IMR-90 (cell line): ENCODE measurements at regions of chr3 and their contacts with region 1.

Region 1: DNA sequence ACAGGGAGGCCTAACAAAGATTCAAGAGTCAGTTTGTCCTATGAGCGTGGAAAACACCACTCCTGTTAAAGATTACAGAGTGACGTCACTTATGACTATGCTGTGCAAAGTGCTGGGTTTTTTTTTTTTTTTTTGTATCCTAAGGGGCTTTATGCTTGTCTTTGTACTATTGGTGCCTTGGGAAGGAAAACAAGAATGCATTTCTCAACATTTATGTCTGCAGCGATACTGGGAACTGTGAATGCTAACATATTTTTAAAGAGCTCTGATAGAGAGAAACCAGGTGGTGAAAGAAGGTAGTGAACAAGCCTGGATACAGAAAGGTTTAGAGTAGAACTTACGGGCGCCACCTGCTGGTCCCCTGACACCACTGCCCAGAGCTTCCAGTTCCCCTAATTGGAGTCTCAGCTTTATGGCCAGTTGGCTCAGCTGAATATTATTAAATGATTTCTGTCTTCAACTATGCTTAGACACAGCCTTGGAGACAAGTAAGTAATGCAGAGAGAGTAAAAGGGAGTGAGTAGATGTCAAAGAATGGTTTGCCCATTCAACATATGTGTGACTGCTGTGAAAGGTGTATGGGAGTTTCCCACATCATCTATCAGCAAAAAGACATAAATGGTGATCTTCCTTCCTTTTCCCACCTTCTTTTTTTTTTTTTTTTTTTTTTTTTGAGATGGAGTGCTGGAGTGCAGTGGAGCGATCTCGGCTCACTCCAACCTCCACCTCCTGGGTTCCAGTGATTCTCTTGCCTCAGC is 807.9 kb upstream of the CFAP20DC start:
- DNase-seq: peak; percentile 81
- ATAC-seq: peak; percentile 99
- H3K4me3 ChIP-seq: no peak overlapping the region
- H3K27ac ChIP-seq: no peak overlapping the region
- H3K4me1 ChIP-seq: no peaks in the 10 kb centered on the region
- H3K27me3 ChIP-seq: no peaks in the 10 kb centered on the region
- CTCF ChIP-seq: peak; percentile 96
- POLR2A ChIP-seq: no peak
- RAD21 ChIP-seq: peak; percentile 90

Region 2: GRCh38 chr3:58824285-58824684 is 1033.5 kb before region 1 on chr3:
- CTCF ChIA-PET with region 1: no interaction called
- POLR2A ChIA-PET with region 1: no interaction called
- dilution Hi-C with region 1: no loop called
- in situ Hi-C with region 1: loop called (anchors 25 kb)
- intact Hi-C with region 1: loop called (anchors 10 kb)
- DNase-seq: peak; percentile 73
- ATAC-seq: peak; percentile 89
- H3K4me3 ChIP-seq: no peak overlapping the region
- H3K27ac ChIP-seq: no peak overlapping the region
- H3K4me1 ChIP-seq: no peaks in the 10 kb centered on the region
- H3K27me3 ChIP-seq: no peaks in the 10 kb centered on the region
- CTCF ChIP-seq: peak; percentile 89
- POLR2A ChIP-seq: no peak
- RAD21 ChIP-seq: peak; percentile 93

Region 3: GRCh38 chr3:59313365-59313764 is 544.4 kb before region 1 on chr3:
- CTCF ChIA-PET with region 1: no interaction called
- POLR2A ChIA-PET with region 1: no interaction called
- dilution Hi-C with region 1: no loop called
- in situ Hi-C with region 1: no loop called
- intact Hi-C with region 1: loop called (anchors 1 kb)
- DNase-seq: peak; percentile 13
- ATAC-seq: peak; percentile 79
- H3K4me3 ChIP-seq: no peak overlapping the region
- H3K27ac ChIP-seq: no peak overlapping the region
- H3K4me1 ChIP-seq: no peaks in the 10 kb centered on the region
- H3K27me3 ChIP-seq: no peaks in the 10 kb centered on the region
- CTCF ChIP-seq: peak; percentile 61
- POLR2A ChIP-seq: no peak
- RAD21 ChIP-seq: peak; percentile 70

Region 4: GRCh38 chr3:59632760-59633573 is 224.8 kb before region 1 on chr3:
- CTCF ChIA-PET with region 1: interaction called, 5 read pairs
- POLR2A ChIA-PET with region 1: interaction called, 3 read pairs
- dilution Hi-C with region 1: no loop called
- in situ Hi-C with region 1: no loop called
- intact Hi-C with region 1: loop called (anchors 10 kb)
- DNase-seq: peak; percentile 50
- ATAC-seq: peak; percentile 90
- H3K4me3 ChIP-seq: no peak overlapping the region
- H3K27ac ChIP-seq: peak overlapping the region; percentile 53; the same call in 1 of the 2 replicates
- H3K4me1 ChIP-seq: peaks cover 7% of the 10 kb centered on the region
- H3K27me3 ChIP-seq: no peaks in the 10 kb centered on the region
- CTCF ChIP-seq: no peak
- POLR2A ChIP-seq: no peak
- RAD21 ChIP-seq: no peak

Region 5: DNA sequence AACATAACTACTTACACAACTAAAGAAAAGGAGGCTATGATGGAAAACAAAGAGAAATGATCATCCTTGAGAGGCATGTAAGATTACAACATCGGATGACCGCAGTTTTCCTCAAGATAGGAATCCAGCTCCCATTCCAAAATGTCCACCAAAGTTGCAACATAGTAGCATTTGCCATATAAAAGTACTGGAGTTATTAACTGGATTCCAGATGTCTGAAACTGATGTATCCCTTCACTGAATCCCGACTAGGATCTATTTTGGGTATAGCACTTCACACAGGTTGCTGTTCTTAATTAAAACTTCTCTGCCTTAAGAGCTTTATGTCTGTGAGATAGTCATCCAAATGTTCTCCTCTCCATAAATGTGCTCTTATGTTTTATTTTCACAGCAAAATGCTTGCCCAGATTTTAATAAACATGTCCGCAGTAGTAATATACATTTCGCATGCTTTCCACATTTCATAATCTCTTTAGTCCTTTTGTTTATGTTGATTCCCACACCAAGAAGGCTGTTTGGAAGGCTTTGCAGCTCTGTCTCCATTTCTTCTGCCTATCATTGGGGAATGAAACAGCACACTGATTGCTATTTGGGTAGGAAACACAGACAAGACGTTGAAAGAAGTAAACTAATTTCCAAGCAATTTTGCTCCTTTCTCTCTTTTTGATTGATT is 91.4 kb before region 1 on chr3:
- CTCF ChIA-PET with region 1: interaction called, 3 read pairs
- POLR2A ChIA-PET with region 1: interaction called, 4 read pairs
- dilution Hi-C with region 1: no loop called
- in situ Hi-C with region 1: no loop called
- intact Hi-C with region 1: loop called (anchors 2 kb)
- DNase-seq: peak; percentile 93
- ATAC-seq: peak; percentile 73
- H3K4me3 ChIP-seq: no peak overlapping the region
- H3K27ac ChIP-seq: peak overlapping the region; percentile 95; the same call in 1 of the 2 replicates
- H3K4me1 ChIP-seq: peaks cover 12% of the 10 kb centered on the region
- H3K27me3 ChIP-seq: no peaks in the 10 kb centered on the region
- CTCF ChIP-seq: no peak
- POLR2A ChIP-seq: no peak
- RAD21 ChIP-seq: no peak